ENCODE measurements at regions of chr4 and their contacts with region 1.

Region 1: GRCh38 chr4:78379991-78380729 is 171.4 kb upstream of the ANXA3 start:
- DNase-seq: no peak
- H3K4me3 ChIP-seq: no peak overlapping the region
- H3K27ac ChIP-seq: no peak overlapping the region
- H3K27me3 ChIP-seq: no peaks in the 10 kb centered on the region
- CTCF ChIP-seq: no peak

Region 2: GRCh38 chr4:78136109-78137081 is 243.8 kb before region 1 on chr4:
- intact Hi-C with region 1: loop called in 1 of 2 experiments (anchors 5 kb)
- DNase-seq: no peak
- H3K4me3 ChIP-seq: no peak overlapping the region
- H3K27ac ChIP-seq: no peak overlapping the region
- H3K27me3 ChIP-seq: no peaks in the 10 kb centered on the region
- CTCF ChIP-seq: no peak

Measured in dorsolateral prefrontal cortex (tissue), 120 donors.